Activated CD8-positive, alpha-beta T cell treated with anti-CD3 and anti-CD28 coated beads for 36 hours (primary cell): ENCODE measurements at regions of chr13 and their contacts with region 1.

Region 1: DNA sequence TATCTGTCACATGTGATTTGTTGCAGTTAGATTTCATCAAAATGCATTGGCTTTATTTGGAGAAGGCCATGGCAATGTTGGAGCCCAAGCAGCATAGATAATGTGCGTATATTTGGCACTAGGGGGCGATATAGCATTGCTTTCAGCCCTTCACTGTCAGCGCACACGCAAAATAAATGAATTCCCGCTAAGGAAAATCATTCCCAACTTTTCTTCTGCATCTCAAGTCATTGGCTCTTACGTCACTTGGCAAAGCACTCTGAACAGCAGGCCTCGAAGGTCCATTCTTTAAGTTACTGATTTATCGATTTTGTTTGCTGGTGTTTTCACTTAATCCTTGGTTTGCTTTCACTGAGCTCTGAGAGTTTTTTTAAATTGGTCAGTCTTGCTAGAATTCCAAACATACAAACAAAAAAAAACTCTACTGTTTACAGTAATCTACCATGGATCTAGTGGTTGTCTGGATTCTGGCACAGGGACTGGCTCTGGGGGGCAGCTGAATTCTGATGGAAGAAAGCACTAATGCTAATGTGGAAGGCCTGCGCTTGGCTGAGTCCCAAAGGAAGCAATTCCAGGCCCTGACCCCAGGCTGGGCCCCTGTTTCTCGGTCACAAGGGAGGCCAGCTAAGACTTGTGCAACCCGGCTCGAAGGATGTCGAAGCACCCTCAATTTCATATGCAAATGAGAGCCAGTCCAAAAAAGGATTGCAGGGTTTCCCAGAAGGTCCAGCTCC is 97.7 kb upstream of the IPO5 start:
- DNase-seq: peak; percentile 37
- ATAC-seq: peak; percentile 53
- H3K4me3 Mint-ChIP-seq: no peak overlapping the region
- H3K27ac Mint-ChIP-seq: no peak overlapping the region
- H3K4me1 Mint-ChIP-seq: peaks cover 2% of the 10 kb centered on the region
- H3K27me3 Mint-ChIP-seq: peaks cover 8% of the 10 kb centered on the region
- CTCF ChIP-seq: peak; percentile 93

Region 2: GRCh38 chr13:97786510-97786909 is 69.2 kb before region 1 on chr13:
- CTCF ChIA-PET with region 1: no interaction called
- POLR2A ChIA-PET with region 1: no interaction called
- intact Hi-C with region 1: no loop called
- DNase-seq: no peak
- ATAC-seq: no peak
- H3K4me3 Mint-ChIP-seq: no peak overlapping the region
- H3K27ac Mint-ChIP-seq: no peak overlapping the region
- H3K4me1 Mint-ChIP-seq: no peaks in the 10 kb centered on the region
- H3K27me3 Mint-ChIP-seq: no peaks in the 10 kb centered on the region
- CTCF ChIP-seq: no peak

Region 3: DNA sequence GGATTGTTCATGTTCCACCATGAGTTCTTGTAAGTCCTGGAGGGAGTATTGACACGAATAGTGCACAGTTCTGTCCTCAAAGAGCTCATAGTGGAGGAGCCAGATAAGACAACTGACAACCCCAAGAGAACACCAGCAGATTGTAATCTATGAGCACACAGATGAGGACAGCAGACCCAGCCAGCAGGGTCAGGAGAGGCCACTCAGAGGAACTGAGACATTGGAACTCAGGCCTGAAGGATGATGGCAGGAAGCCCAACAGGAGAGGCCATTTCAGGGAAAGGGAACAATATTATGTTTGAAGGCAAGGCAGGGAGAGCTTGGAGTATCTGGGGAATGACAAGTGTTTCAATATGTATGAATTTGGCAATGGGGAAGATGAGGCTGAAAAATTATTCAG is 34.1 kb after region 1 on chr13:
- CTCF ChIA-PET with region 1: no interaction called
- POLR2A ChIA-PET with region 1: no interaction called
- intact Hi-C with region 1: no loop called
- DNase-seq: no peak
- ATAC-seq: no peak
- H3K4me3 Mint-ChIP-seq: no peak overlapping the region
- H3K27ac Mint-ChIP-seq: no peak overlapping the region
- H3K4me1 Mint-ChIP-seq: no peaks in the 10 kb centered on the region
- H3K27me3 Mint-ChIP-seq: peaks cover 10% of the 10 kb centered on the region
- CTCF ChIP-seq: no peak

Region 4: GRCh38 chr13:97911311-97912128 is 55.8 kb after region 1 on chr13:
- CTCF ChIA-PET with region 1: interaction called, 10 read pairs
- POLR2A ChIA-PET with region 1: no interaction called
- intact Hi-C with region 1: no loop called
- DNase-seq: peak; percentile 47
- ATAC-seq: peak; percentile 66
- H3K4me3 Mint-ChIP-seq: no peak overlapping the region
- H3K27ac Mint-ChIP-seq: no peak overlapping the region
- H3K4me1 Mint-ChIP-seq: no peaks in the 10 kb centered on the region
- H3K27me3 Mint-ChIP-seq: peaks cover 15% of the 10 kb centered on the region
- CTCF ChIP-seq: peak; percentile 36

Region 5: DNA sequence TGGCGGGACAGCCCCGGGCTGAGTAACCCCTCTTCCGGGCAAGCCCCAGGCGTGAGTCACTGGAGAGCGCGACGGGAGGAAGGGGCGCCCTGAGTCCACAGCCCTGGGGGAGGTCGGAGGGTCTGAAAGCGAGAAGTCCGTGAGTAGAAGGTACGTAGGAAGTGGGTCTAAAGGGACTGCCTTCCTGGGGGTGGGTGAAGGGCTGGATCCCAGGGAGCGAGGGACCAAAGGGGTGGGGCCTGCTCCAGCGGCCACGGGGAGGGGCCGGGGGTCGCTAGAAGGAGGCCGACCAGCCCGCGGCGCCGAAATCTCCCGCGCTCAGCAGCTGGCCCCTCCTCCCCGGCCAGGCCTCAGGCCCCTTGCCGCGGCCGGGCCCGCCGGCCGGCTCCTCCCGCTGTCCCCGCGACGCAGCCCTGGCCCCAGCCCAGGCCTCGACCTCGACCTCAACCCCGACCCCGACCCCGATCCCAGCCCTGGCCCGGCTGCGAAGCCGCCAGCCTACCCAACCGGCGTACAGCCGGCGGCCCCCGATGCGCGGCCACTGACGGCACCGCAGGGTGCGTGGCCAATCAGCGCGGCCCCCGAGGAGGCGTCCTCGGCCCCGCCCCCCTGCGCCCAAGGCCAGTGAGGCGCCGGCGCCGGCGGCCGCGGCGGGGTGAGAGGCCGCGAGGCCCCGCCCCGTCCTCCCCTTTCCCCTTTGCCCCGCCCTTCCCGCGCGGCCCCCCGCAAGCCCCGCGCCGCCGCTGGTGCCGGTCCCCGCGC is 120.3 kb after region 1 on chr13:
- CTCF ChIA-PET with region 1: no interaction called
- POLR2A ChIA-PET with region 1: no interaction called
- intact Hi-C with region 1: loop called (anchors 10 kb)
- DNase-seq: peak; percentile 90
- ATAC-seq: peak; percentile 91
- H3K4me3 Mint-ChIP-seq: peak overlapping the region; percentile 89
- H3K27ac Mint-ChIP-seq: peak overlapping the region; percentile 98
- H3K4me1 Mint-ChIP-seq: peaks cover 27% of the 10 kb centered on the region
- H3K27me3 Mint-ChIP-seq: peaks cover 1% of the 10 kb centered on the region
- CTCF ChIP-seq: no peak

Region 6: GRCh38 chr13:98041081-98041820 is 185.5 kb after region 1 on chr13:
- CTCF ChIA-PET with region 1: no interaction called
- POLR2A ChIA-PET with region 1: no interaction called
- intact Hi-C with region 1: no loop called
- DNase-seq: no peak
- ATAC-seq: no peak
- H3K4me3 Mint-ChIP-seq: no peak overlapping the region
- H3K27ac Mint-ChIP-seq: no peak overlapping the region
- H3K4me1 Mint-ChIP-seq: no peaks in the 10 kb centered on the region
- H3K27me3 Mint-ChIP-seq: peaks cover 5% of the 10 kb centered on the region
- CTCF ChIP-seq: no peak